HEK293T (cell line): ENCODE measurements at regions of chr6 and their contacts with region 1.

Region 1: GRCh38 chr6:33592411-33593054 is 12.5 kb upstream of the BAK1 start:
- DNase-seq: no peak

Region 2: DNA sequence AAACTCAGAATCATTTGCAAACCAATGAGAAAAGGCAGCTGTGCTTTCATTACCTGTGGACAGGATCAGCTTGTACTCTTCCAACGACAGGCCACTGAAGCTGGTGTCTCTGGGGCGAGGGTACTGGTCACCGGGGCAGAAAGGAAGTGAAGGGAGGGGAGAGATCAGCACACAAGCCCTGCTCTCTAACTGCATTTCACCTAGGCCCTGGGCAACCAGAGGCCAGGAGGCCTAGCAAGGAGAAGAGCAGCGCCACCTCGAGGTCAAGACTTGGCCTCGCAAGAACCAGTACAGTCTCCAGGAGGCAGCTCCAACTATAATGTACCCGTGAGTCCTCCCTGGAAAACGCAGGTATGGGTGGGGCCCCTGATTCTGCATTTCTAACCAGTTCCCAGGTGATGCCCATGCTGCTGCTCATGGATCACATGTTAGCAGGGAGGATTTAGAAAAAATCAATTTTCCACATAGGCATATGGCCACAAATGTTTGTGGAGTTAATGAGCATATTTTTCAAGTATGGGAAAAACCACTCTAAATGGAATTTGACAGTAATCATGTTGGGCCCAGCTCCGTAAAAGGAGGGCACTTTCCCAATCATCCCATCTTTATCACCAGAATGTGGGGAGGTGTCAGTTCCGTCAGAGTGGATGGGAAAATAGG is 108.0 kb after region 1 on chr6:
- CTCF ChIA-PET with region 1: interaction called, 10 read pairs
- POLR2A ChIA-PET with region 1: no interaction called
- DNase-seq: peak; percentile 74